ENCODE measurements at regions of chr9 and their contacts with region 1.

Region 1: DNA sequence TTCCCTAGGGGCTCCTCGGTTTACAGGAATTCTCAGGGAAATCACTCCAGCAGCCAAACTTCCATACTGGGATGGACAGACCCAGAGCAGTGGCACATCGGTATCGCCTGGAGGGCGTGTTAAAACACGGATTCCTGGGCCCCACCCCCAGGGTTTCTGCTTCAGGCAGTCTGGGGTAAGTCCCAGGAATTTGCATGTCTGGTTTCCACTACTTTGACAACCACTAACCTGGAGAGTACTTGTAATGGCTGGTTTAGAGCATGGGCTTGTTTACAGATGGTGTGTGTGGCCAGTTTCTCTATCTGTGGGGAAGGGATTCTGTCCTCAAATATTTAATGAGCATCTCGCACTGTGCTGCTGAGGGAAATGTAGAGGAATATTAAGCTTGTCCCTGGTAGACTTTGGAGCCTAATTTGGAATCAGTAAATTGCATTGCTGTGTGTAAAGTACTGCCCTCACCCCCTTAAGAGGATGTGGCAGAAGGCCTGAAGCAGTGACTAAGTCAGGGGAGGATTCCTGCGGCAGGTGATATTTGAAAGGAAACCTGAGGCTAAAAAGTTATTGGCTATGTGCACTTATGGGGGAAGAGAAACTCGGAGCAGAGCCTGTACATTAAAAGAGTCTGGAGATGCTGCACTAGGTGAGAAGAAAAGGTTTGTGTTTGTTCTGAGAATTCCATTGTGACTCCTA is 18.6 kb upstream of the TJP2 start:
- DNase-seq: peak; percentile 72
- ATAC-seq: peak; percentile 91
- H3K4me3 Mint-ChIP-seq: no peak overlapping the region
- H3K27ac Mint-ChIP-seq: peak overlapping the region; percentile 96
- H3K4me1 Mint-ChIP-seq: peaks cover 32% of the 10 kb centered on the region
- H3K27me3 Mint-ChIP-seq: no peaks in the 10 kb centered on the region
- CTCF ChIP-seq: no peak

Region 2: DNA sequence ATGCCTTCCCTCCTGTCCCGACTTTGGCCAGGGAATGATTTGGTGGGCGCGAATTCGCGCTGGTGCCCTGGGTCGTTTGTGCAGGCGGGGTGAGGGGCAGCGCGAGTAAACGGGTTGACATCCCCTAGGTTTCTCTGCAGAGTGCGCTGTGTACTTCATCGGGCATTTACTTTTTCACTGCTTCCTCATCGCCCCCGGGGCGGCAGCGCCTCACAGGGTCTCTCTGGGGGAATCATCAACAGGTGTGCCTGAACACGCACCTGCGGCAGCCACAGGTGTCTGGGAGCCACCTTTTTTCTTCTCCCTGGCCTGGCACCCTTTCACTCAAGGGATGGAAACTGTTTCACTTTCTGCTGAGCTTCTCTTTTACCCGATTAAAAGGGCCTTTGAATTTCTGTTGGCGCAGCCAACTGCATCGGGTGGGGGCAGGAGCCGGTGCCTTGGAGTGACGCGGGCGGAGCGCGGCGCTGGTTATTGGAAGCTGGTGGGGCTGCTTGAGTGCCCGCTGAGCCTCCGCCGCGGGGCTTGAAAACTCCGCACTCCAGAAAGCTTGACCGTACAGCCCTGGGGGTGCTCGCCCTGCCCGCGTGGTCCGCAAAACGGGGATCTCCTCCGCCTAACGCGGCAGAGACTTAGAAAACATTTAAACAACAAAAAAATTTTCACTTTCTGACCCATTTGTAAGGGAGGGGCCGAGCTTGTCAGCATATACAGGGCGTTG is 33.5 kb before region 1 on chr9:
- CTCF ChIA-PET with region 1: interaction called, 15 read pairs
- POLR2A ChIA-PET with region 1: interaction called, 4 read pairs
- DNase-seq: peak; percentile 67
- ATAC-seq: peak; percentile 12
- H3K4me3 Mint-ChIP-seq: peak overlapping the region; percentile 93
- H3K27ac Mint-ChIP-seq: peak overlapping the region; percentile 99
- H3K4me1 Mint-ChIP-seq: peaks cover 27% of the 10 kb centered on the region
- H3K27me3 Mint-ChIP-seq: no peaks in the 10 kb centered on the region
- CTCF ChIP-seq: no peak

Region 3: GRCh38 chr9:69168709-69169217 is 13.3 kb after region 1 on chr9:
- CTCF ChIA-PET with region 1: interaction called, 19 read pairs
- POLR2A ChIA-PET with region 1: interaction called, 3 read pairs
- DNase-seq: peak; percentile 53
- ATAC-seq: peak; percentile 77
- H3K4me3 Mint-ChIP-seq: no peak overlapping the region
- H3K27ac Mint-ChIP-seq: no peak overlapping the region; the same call in 1 of the 2 replicates
- H3K4me1 Mint-ChIP-seq: peaks cover 63% of the 10 kb centered on the region
- H3K27me3 Mint-ChIP-seq: no peaks in the 10 kb centered on the region
- CTCF ChIP-seq: no peak

Region 4: GRCh38 chr9:69174616-69175463 is 19.4 kb after region 1 on chr9:
- CTCF ChIA-PET with region 1: interaction called, 19 read pairs
- POLR2A ChIA-PET with region 1: interaction called, 3 read pairs
- DNase-seq: peak; percentile 63
- ATAC-seq: peak; percentile 44
- H3K4me3 Mint-ChIP-seq: peak overlapping the region; percentile 77
- H3K27ac Mint-ChIP-seq: peak overlapping the region; percentile 75
- H3K4me1 Mint-ChIP-seq: peaks cover 74% of the 10 kb centered on the region
- H3K27me3 Mint-ChIP-seq: peaks cover 6% of the 10 kb centered on the region
- CTCF ChIP-seq: no peak

Measured in WTC11 (cell line).